MCF 10A (cell line): ENCODE measurements at regions of chr6 and their contacts with region 1.

Region 1: GRCh38 chr6:52647199-52647598 is 23.7 kb upstream of the TMEM14A start:
- DNase-seq: peak; percentile 22
- H3K4me3 Mint-ChIP-seq: no peak overlapping the region
- H3K27ac Mint-ChIP-seq: no peak overlapping the region
- H3K4me1 Mint-ChIP-seq: peaks cover 9% of the 10 kb centered on the region
- H3K27me3 Mint-ChIP-seq: peaks cover 24% of the 10 kb centered on the region
- CTCF ChIP-seq: no peak

Region 2: DNA sequence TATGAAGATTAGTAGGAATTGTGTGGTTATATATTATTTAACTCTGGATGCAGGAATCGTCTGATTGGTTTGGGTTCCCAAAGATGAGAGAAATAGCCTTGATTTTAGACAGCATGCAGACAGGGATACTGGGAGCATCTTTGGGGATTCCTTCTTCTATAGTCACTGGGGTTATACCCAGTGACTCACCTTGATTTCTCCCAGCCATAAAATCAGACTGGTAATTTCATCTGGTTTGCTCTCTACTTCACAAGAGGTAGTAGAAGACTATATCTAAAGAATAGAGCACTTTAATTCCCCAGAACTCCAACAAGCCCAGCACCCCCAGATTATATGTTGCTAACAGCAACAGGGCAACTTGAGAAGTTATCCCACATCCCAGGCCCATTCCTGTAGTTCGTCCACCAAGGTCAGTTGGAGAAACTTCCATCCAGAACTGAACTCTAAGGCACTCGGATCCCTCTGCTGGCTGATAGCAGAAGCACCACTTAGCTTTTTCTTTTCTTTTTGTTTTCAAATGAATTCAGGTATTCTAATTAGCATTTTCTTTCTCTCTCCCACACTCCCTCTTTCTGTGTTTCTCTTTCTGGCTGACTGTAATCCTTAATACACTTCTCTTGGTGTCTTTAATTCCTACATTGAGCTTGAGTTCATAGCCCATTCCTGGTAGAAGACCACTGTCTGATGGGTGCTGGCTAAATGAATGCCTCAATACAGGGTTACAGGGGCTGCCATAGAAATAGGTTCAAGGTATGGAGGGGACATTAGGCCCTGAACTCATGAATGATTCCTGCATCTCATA is 247.5 kb before region 1 on chr6:
- CTCF ChIA-PET with region 1: interaction called, 11 read pairs
- POLR2A ChIA-PET with region 1: no interaction called
- intact Hi-C with region 1: no loop called
- DNase-seq: peak; percentile 70
- H3K4me3 Mint-ChIP-seq: no peak overlapping the region
- H3K27ac Mint-ChIP-seq: no peak overlapping the region
- H3K4me1 Mint-ChIP-seq: peaks cover 10% of the 10 kb centered on the region
- H3K27me3 Mint-ChIP-seq: no peaks in the 10 kb centered on the region
- CTCF ChIP-seq: peak; percentile 73

Region 3: DNA sequence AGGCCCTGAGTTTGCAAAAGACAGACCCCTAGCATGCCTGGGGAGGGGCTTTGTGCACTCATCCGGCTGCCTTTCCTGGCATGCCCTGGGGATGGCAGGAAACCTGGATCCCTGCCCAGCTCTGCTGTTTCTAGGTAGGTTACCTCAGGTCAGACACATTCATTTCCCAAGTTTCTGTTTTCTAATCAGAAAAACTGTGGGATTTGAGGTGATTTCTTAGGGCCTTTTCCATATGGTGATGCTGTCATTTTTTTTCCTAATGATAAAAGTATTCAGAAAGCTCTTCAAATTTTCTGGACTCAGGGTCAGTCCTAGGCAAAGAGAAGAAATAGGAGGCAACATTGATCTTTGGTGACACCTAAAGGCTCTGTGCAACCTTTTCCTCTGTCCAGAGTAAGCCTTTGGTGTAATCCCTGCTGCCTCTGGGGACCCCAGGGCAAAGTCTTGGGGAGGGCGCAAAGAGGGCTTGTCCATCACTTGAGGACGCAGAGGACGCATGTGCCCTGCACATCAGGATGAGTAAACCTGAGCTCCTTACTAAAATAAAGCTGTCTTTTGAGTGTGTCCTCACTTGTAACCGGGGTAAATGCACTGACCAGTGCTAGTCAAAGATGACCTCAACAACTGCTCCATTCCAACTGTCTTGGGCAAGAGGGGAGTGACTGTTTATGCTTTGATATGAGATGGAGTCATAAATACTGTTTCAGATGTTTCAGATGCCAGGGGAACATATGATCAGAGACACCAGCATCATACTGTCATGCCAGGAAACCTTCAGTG is 56.9 kb before region 1 on chr6:
- CTCF ChIA-PET with region 1: interaction called, 35 read pairs
- POLR2A ChIA-PET with region 1: no interaction called
- intact Hi-C with region 1: no loop called
- DNase-seq: peak; percentile 68
- H3K4me3 Mint-ChIP-seq: no peak overlapping the region
- H3K27ac Mint-ChIP-seq: no peak overlapping the region
- H3K4me1 Mint-ChIP-seq: peaks cover 19% of the 10 kb centered on the region
- H3K27me3 Mint-ChIP-seq: no peaks in the 10 kb centered on the region
- CTCF ChIP-seq: peak; percentile 11

Region 4: DNA sequence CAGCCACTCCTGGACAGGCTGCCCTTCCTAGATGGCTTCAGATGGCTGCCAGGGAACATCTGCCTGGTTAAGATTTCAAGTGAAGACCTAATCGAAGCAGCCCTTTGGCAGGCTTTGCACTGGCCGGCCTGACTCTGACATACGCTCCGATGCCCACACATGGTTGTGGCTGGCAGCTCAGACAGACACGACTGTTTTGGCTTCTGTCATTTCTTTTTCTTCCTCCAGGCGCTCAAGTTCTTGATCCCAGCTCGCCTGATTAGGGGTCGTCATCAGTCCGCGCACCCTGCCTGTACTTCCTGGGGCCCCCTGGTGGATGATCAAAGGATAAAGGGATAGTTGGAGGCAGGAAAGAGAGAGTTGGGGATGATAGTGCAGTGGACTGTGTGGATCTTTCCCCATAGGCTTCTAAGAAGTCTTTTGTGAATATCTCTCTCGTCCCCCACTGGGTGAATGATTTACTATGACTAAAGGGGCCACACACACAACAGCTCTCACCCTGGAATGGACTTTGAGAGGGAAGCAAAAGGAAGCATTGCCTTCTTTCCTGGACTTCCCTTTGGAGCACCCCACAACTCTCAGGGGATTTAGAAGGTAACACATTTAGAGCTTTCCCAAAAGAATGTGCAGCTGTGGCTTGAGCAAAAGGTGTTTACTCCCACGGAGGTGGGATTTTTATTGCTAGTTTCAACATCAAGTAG is 48.9 kb before region 1 on chr6:
- CTCF ChIA-PET with region 1: interaction called, 35 read pairs
- POLR2A ChIA-PET with region 1: no interaction called
- intact Hi-C with region 1: no loop called
- DNase-seq: peak; percentile 52
- H3K4me3 Mint-ChIP-seq: no peak overlapping the region
- H3K27ac Mint-ChIP-seq: no peak overlapping the region
- H3K4me1 Mint-ChIP-seq: peaks cover 22% of the 10 kb centered on the region
- H3K27me3 Mint-ChIP-seq: no peaks in the 10 kb centered on the region
- CTCF ChIP-seq: peak; percentile 39

Region 5: DNA sequence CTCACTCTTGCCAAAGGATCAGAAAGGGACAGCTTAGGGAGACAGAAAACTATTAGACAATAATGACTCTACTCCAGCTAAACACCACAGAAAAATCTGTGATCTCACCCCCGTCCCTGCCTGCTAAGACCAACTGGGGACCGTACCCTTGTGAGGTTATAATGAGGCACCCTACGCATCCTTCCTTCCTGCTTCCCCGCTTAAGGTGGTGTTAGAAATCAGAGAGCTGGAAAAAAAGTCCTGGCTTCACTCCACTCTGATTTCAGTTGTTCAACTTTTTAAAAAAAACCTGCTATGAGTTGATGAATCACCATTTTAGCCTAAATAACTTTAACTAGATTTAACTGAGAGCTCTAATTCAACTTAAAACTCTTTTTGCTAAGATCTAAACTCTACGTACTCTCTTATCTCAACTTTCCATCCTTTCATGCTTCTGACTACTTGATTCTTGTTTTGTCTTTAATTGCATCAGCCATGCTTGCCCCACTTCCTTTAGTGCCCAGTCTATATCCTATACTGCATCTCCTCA is 12.1 kb before region 1 on chr6:
- CTCF ChIA-PET with region 1: interaction called, 67 read pairs
- POLR2A ChIA-PET with region 1: interaction called, 4 read pairs
- intact Hi-C with region 1: no loop called
- DNase-seq: no peak
- H3K4me3 Mint-ChIP-seq: no peak overlapping the region
- H3K27ac Mint-ChIP-seq: no peak overlapping the region
- H3K4me1 Mint-ChIP-seq: no peaks in the 10 kb centered on the region
- H3K27me3 Mint-ChIP-seq: peaks cover 9% of the 10 kb centered on the region
- CTCF ChIP-seq: no peak